CD4-positive, alpha-beta T cell (primary cell): ENCODE measurements at regions of chr20 and their contacts with region 1.

Region 1: GRCh38 chr20:5529331-5530148 is 212.8 kb upstream of the PROKR2 start:
- DNase-seq: peak; percentile 73 to 91 (median 82)
- ATAC-seq: peak; percentile 91
- H3K4me3 ChIP-seq: peak overlapping the region; percentile 11
- H3K4me3 Mint-ChIP-seq: peak overlapping the region; percentile 43
- H3K27ac ChIP-seq: no peak overlapping the region
- H3K27ac Mint-ChIP-seq: peak overlapping the region; percentile 61
- H3K4me1 ChIP-seq: peaks cover 13% of the 10 kb centered on the region
- H3K4me1 Mint-ChIP-seq: peaks cover 16% of the 10 kb centered on the region
- H3K27me3 ChIP-seq: no peaks in the 10 kb centered on the region
- H3K27me3 Mint-ChIP-seq: no peaks in the 10 kb centered on the region
- CTCF ChIP-seq: peak; percentile 67

Region 2: DNA sequence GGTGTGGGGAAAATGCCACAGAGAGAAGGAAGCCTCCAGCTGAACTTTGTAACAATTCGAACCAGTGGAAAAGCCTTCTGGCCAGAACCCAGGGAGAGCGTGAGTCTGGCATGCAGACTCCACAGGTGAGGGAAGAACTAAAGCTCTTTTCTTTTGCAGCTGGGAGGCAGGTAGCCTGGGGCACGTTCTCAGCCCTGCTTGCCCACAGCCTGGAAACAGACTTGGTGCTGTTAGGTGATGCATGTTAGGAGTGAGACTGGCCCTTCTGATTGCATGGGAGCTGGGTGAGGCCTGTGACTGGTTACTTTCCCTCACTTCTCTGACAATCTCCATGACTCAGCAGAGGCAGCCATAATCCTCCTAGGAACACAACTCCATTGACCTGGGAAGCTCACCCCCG is 247.0 kb before region 1 on chr20:
- CTCF ChIA-PET with region 1: no interaction called
- POLR2A ChIA-PET with region 1: no interaction called
- intact Hi-C with region 1: no loop called
- DNase-seq: no peak
- ATAC-seq: no peak
- H3K4me3 ChIP-seq: no peak overlapping the region
- H3K4me3 Mint-ChIP-seq: no peak overlapping the region
- H3K27ac ChIP-seq: no peak overlapping the region
- H3K27ac Mint-ChIP-seq: no peak overlapping the region
- H3K4me1 ChIP-seq: no peaks in the 10 kb centered on the region
- H3K4me1 Mint-ChIP-seq: no peaks in the 10 kb centered on the region
- H3K27me3 ChIP-seq: peaks cover 0 to 8% of the 10 kb centered on the region in 2 experiments
- H3K27me3 Mint-ChIP-seq: peaks cover 47% of the 10 kb centered on the region
- CTCF ChIP-seq: no peak

Region 3: DNA sequence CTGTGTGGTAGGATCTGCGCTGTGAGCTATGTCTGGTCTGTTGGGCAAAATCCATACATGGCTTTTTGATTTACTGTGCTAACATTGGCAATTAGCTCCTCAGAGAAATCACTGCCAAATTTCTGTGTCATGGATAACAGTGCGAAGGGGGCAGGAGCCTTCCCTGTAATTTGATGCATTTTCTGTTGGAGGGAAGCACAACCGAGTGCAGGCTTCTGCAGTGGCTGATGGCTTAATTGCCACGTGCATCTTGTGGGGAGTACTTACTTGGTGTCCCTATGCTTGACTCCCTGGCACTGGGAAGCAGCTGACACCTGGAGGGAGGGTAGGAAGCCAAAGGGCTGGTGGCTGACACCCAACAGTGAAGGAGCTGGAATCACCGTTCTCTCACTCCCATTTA is 113.5 kb before region 1 on chr20:
- CTCF ChIA-PET with region 1: no interaction called
- POLR2A ChIA-PET with region 1: no interaction called
- intact Hi-C with region 1: no loop called
- DNase-seq: no peak
- ATAC-seq: no peak
- H3K4me3 ChIP-seq: no peak overlapping the region
- H3K4me3 Mint-ChIP-seq: no peak overlapping the region
- H3K27ac ChIP-seq: no peak overlapping the region
- H3K27ac Mint-ChIP-seq: no peak overlapping the region
- H3K4me1 ChIP-seq: no peaks in the 10 kb centered on the region
- H3K4me1 Mint-ChIP-seq: no peaks in the 10 kb centered on the region
- H3K27me3 ChIP-seq: no peaks in the 10 kb centered on the region
- H3K27me3 Mint-ChIP-seq: peaks cover 28% of the 10 kb centered on the region
- CTCF ChIP-seq: no peak

Region 4: DNA sequence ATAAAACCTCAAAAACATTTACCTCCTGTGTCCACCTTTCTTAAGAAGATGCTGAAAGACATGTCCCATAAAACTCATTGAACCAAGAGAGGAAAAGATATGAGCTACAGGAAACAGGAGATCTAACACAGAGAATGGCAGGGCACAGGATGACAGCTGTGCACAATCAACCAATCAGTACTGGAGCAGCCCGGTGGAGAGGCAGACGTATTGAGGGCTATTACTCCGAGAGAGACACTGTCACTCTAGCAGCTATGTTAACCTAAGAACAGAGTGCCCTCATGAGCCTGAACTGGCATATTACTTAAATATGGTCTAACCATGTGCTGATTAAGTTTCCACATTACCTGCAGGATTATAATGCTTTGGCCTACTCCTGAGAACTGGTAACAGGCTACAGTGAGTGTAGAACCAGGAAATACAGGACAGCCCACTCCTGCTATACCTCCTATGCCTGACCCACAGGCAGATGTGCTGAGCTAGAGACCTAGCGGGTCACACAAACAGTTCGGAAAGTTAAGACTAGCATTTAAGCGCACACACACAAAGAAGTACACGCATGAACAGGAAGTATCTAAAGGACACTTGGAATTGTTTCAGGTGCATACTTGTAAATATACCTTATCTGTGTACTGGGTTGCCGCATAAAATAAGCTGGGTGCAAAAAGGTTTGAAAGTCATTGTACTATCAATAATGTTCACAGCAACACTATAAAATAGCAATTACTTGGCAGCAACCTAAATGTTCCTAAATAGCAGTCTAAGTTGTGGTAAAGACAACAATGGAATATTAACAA is 21.4 kb after region 1 on chr20:
- CTCF ChIA-PET with region 1: interaction called, 18 read pairs
- POLR2A ChIA-PET with region 1: no interaction called
- intact Hi-C with region 1: no loop called
- DNase-seq: peak in 1 of 14 experiments; percentile 7
- ATAC-seq: peak; percentile 76
- H3K4me3 ChIP-seq: no peak overlapping the region
- H3K4me3 Mint-ChIP-seq: no peak overlapping the region
- H3K27ac ChIP-seq: no peak overlapping the region
- H3K27ac Mint-ChIP-seq: peak overlapping the region; percentile 3
- H3K4me1 ChIP-seq: no peaks in the 10 kb centered on the region
- H3K4me1 Mint-ChIP-seq: peaks cover 43% of the 10 kb centered on the region
- H3K27me3 ChIP-seq: no peaks in the 10 kb centered on the region
- H3K27me3 Mint-ChIP-seq: no peaks in the 10 kb centered on the region
- CTCF ChIP-seq: no peak

Region 5: GRCh38 chr20:5788385-5788895 is 258.9 kb after region 1 on chr20:
- CTCF ChIA-PET with region 1: interaction called, 59 read pairs
- POLR2A ChIA-PET with region 1: interaction called, 7 read pairs
- intact Hi-C with region 1: loop called (anchors 1 kb)
- DNase-seq: peak; percentile 55 to 93 (median 74)
- ATAC-seq: peak; percentile 98
- H3K4me3 ChIP-seq: no peak overlapping the region
- H3K4me3 Mint-ChIP-seq: no peak overlapping the region
- H3K27ac ChIP-seq: no peak overlapping the region
- H3K27ac Mint-ChIP-seq: peak overlapping the region; percentile 16
- H3K4me1 ChIP-seq: no peaks in the 10 kb centered on the region
- H3K4me1 Mint-ChIP-seq: peaks cover 23% of the 10 kb centered on the region
- H3K27me3 ChIP-seq: no peaks in the 10 kb centered on the region
- H3K27me3 Mint-ChIP-seq: no peaks in the 10 kb centered on the region
- CTCF ChIP-seq: peak; percentile 92

Region 6: DNA sequence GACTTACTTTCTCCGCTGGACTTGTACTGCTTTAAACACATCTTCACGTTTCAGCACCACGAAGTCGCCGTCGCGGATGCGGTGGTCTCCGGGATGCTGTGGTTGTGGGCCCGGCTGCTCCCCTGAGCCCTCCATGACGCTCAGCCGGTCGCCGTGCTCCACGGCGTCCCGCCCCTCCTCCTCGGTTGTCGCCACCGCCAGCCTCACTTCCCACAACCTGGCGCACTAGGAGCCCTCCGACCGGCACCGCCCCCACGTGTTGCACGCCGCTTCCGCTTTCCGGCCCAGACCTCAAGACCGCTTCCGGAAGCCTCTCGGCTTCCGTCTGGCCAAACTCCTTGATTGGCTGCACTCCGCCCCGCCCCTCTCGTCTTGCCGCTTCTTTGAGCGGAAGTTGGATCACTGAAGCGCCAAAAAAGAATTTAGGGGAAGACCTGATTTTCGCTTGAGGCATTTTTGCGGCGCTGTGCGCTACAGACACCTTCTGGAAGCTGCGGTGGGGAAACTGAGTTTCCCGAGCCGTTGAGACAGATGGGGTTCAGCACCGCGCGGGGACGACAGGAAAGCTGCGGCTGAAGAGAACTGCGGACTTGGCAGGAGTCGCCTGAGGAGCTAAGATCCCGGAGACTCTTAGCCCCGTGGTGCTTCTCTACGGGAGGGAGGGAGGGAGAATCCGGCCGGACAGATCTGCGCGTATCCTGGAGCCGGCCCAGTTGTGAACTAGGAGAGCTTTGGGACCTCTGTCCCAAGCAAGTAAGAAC is 420.9 kb after region 1 on chr20 and contains the starts of genes MCM8 and TRMT6:
- CTCF ChIA-PET with region 1: no interaction called
- POLR2A ChIA-PET with region 1: no interaction called
- intact Hi-C with region 1: loop called in 1 of 2 experiments (anchors 5 kb)
- DNase-seq: peak; percentile 89 to 98 (median 94)
- ATAC-seq: peak; percentile 97
- H3K4me3 ChIP-seq: peak within 1 kb of the TSS; percentile 86
- H3K4me3 Mint-ChIP-seq: peak within 1 kb of the TSS; percentile 94
- H3K27ac ChIP-seq: peak within 1 kb of the TSS; percentile 55 to 61
- H3K27ac Mint-ChIP-seq: peak within 1 kb of the TSS; percentile 81
- H3K4me1 ChIP-seq: peaks cover 25% of the 10 kb centered on the region
- H3K4me1 Mint-ChIP-seq: peaks cover 38% of the 10 kb centered on the region
- H3K27me3 ChIP-seq: no peaks in the 10 kb centered on the region
- H3K27me3 Mint-ChIP-seq: no peaks in the 10 kb centered on the region
- CTCF ChIP-seq: no peak
- total RNA-seq, gene MCM8: 1.4 to 1.7 TPM
- total RNA-seq, gene TRMT6: 8.1 TPM

Region 7: GRCh38 chr20:6074145-6074561 is 544.6 kb after region 1 on chr20:
- CTCF ChIA-PET with region 1: interaction called, 11 read pairs
- POLR2A ChIA-PET with region 1: no interaction called
- intact Hi-C with region 1: loop called (anchors 1 kb)
- DNase-seq: peak in 2 of 14 experiments; percentile 19 to 33
- ATAC-seq: peak; percentile 39
- H3K4me3 ChIP-seq: no peak overlapping the region
- H3K4me3 Mint-ChIP-seq: no peak overlapping the region
- H3K27ac ChIP-seq: no peak overlapping the region
- H3K27ac Mint-ChIP-seq: no peak overlapping the region
- H3K4me1 ChIP-seq: no peaks in the 10 kb centered on the region
- H3K4me1 Mint-ChIP-seq: no peaks in the 10 kb centered on the region
- H3K27me3 ChIP-seq: no peaks in the 10 kb centered on the region
- H3K27me3 Mint-ChIP-seq: no peaks in the 10 kb centered on the region
- CTCF ChIP-seq: no peak